ENCODE measurements at regions of chr10 and their contacts with region 1.

Region 1: DNA sequence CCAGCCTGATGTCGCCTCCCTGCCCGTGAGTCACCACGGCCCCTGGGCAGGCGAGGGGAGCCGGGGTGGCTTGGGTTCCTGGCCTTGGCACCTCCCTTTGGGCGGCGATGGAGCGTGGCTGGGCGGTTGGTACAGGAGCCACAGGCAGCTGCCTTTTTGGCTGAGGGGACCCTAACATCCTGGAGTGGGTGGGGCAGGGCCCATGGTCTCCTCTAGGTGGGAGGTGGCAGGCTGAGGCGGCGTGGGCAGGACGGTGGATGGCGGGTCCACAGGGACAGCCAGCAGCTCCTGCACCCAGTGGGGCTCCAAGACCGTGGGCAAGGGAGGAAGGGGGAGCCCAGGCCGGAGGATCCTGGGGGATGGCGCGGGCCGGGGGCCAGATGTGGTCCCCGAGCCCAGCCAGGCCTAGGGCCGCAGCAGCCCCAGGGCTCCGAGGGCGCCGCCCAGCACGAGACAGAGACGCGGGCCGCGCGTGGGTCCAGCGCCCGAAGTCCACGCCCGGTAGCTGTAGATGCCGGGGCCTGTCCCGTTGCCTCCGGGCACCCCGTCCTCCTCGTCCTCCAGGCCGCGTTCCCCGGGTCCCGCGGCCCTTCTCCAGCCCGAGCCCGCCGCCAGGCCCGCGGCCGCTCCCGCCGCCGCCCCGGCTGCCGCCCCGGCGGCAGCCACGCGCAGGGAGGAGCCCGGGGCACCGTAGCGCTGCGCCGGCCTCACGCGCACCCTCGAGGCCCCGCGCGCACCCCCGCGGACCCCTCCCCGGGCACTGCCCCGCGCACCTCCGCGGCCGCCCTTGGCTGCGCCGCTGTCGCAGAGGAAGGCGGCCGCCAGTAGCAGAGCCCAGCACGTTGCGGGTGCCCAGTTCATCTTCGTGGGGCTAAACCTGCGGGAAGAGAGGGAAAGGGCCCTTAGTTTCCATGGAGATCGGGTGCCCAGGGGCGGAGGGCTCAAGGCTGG is 1.3 kb downstream of the SPRN start:
- DNase-seq: peak in 2 of 6 donors; percentile 27 to 73
- ATAC-seq: peak; percentile 23 to 51 (median 41)
- H3K4me3 ChIP-seq: no peak overlapping the region
- H3K27ac ChIP-seq: no peak overlapping the region
- H3K4me1 ChIP-seq: peaks cover 0 to 3% (median 0%) of the 10 kb centered on the region in 3 donors
- H3K27me3 ChIP-seq: no peaks in the 10 kb centered on the region
- CTCF ChIP-seq: no peak

Region 2: DNA sequence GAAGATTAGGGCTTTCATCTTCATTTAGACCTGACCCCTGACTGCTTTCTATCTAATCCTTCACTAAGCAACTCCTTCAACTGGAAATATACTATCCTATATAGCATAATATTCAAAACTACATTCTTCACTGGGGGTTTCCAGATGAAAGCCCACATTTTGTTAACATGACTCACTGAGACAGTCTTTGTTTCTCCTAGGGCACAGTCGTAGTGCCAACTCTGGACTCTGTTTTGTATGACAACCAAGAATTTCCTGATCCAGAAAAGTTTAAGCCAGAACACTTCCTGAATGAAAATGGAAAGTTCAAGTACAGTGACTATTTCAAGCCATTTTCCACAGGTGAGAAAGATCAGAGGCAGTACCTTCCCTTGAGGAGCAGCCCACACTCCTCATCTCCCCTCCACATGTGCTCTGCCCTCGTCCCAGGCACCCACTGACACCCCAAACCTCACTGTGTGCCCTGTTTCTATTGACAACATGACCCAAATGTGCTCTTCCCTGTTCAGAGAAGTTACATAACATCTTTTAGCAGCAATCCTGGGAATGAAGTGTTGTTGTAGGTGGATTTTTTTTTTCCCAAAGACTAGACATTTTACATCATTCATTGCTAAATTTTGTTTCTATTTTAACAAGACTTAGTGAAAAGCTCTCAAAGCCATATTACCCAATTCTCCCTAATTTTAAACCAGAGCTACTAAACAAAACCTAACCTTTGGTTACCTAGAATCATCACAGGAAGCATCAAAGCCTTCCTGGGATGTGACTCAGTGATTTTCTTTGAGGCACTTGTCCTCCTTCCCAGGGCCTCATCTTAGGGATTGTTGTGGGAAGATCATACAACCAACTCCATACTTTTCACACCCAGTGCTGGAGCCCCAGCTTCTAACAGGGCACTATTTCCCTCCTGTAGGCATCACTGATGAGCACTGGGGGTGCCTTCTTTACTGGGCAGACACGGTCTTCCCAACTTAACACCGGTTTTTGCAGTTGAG is 114.8 kb after region 1 on chr10:
- intact Hi-C with region 1: no loop called
- DNase-seq: no peak
- ATAC-seq: no peak
- H3K4me3 ChIP-seq: no peak overlapping the region
- H3K27ac ChIP-seq: no peak overlapping the region
- H3K4me1 ChIP-seq: no peaks in the 10 kb centered on the region
- H3K27me3 ChIP-seq: no peaks in the 10 kb centered on the region
- CTCF ChIP-seq: no peak

Region 3: GRCh38 chr10:133565441-133566294 is 142.6 kb after region 1 on chr10 and contains the start of gene SYCE1:
- intact Hi-C with region 1: loop called in 1 of 3 experiments (anchors 5 kb)
- DNase-seq: peak in 4 of 6 donors; percentile 39 to 63 (median 48)
- ATAC-seq: peak; percentile 61 to 85 (median 69)
- H3K4me3 ChIP-seq: no peak within 1 kb of the TSS
- H3K27ac ChIP-seq: no peak within 1 kb of the TSS
- H3K4me1 ChIP-seq: no peaks in the 10 kb centered on the region
- H3K27me3 ChIP-seq: no peaks in the 10 kb centered on the region
- CTCF ChIP-seq: no peak
- total RNA-seq, gene SYCE1: 0.69 to 1.7 (median 0.98) TPM